Left colon (tissue), 2 donors: ENCODE measurements at regions of chr17 and their contacts with region 1.

Region 1: DNA sequence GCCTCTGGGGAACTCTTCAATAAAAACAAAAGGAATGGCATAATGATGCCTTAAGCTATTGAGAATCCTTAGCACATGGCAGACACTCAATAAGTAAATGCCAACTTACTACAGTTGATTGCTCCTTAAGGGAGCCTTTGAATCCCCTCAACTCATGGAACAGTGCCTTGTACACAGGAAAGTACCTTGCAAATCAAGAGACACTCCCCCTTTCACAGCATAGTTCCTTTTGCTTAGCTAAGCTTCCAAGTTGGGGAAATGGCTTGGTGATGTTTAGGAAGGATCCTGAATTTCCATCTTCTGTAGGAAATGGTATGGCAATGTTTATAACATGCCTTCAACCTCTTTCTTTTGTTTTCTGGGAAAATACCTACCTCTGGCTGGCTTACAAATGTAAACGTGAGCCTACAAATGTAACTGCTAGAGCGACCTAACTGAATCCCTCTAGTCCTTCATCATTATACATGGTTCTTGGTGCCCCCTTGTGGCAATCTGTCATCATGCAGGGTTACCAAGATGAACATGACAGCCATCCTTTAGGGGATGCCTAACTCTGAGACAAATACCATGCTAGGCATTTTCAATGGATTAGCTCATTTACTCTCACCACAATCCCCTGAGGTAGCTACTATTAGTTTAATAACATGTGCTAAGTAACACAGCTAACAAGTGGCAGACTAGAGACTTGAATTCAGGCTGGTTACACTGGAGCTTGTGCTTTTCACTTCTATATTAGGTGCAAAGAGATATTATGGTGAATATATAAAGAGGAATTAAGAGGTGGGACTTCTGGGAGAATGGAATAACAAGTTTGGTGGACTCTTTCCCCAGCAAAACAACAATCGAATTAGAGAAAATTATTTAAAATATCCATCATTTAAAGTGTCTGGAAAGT is 65.0 kb downstream of the MMD start:
- DNase-seq: peak; percentile 44 to 77
- ATAC-seq: peak; percentile 81

Region 2: DNA sequence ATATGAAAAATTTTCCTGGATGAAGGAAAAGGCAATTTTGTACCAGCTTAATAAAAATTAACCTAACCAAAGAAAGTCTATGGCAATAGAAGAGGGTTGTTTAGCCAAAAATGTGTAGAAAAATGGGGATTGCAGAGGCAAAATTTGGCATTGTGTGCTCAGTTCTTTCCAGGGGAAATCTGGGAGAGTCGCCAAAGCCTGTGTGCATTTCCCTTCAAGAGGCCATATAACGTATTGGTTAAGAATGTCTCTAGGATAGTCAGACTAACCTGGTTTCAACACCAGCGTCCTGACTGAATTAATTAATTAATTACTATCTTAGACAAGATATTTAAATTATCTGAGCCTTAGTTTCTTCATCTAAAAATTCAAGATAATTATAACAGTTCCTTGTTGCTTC is 136.7 kb before region 1 on chr17:
- intact Hi-C with region 1: no loop called
- DNase-seq: no peak
- ATAC-seq: no peak

Region 3: GRCh38 chr17:55394357-55395021 is 37.8 kb after region 1 on chr17:
- intact Hi-C with region 1: no loop called
- DNase-seq: peak in 1 of 2 donors; percentile 23
- ATAC-seq: peak; percentile 93

Region 4: GRCh38 chr17:55416470-55417052 is 59.9 kb after region 1 on chr17:
- intact Hi-C with region 1: loop called in 1 of 2 experiments (anchors 10 kb)
- DNase-seq: no peak
- ATAC-seq: no peak

Region 5: DNA sequence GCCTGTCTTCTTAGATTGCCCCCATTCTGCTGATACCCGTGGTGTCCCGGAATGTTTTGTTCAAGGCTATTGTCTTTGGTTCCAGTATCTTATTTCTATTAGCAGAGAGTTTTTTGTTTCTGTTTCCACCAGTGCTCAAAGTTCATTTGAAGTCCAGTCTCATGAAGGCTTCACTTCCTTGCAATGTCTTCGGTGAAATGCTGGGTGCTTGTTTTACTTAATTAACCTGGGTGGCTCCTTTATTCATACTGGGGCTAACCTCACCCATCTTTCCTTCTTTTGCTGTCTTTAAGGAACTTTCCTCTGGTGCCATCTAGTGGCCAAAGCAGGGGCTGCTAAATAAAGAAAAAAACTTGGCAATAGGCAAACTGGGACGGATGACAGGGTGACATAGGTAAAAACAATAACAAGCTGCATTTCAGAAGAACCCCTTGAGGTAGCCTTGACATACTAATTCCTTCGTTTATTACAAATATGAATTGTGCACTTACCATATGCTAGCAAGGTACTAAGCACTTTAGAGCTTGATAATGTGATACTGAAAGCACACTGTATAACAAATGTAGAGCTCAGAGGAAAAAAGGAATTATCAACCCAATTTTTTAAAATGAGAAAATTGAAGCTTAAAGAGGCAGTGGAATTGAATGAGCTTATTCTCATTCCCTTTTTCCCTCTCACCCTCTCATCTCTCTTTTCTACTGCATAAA is 157.4 kb after region 1 on chr17:
- intact Hi-C with region 1: loop called in 1 of 2 experiments (anchors 5 kb)
- DNase-seq: peak; percentile 47 to 82
- ATAC-seq: peak; percentile 83

Region 6: DNA sequence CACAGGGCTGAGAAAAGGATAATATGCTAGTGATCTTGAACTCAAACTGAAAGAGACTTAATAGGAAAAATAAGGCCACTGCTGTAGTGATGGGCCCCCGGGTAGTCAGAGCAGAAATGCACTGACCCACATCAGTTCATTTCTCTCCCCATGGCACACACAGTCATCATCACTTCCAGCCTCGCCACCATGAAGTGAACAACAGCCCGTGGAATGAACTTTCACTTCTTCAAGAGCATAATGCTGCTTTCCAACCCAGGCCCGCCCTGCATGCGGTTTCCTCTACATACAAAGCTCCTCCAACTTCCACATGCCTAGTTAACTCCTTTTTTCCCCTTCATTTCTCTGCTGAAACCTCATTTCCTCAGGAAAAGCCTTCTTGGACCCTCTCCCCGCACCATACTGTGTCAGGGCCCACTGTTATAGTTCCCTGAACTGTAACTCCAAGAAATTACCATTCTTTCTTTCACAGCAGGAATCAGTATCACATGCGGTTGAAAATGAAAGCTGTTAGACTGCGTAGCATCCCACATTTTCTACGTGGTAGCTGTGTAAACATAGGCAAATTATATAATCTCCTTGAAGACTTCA is 220.4 kb after region 1 on chr17:
- intact Hi-C with region 1: no loop called
- DNase-seq: peak in 1 of 2 donors; percentile 36
- ATAC-seq: no peak